SK-N-SH (cell line): ENCODE measurements at regions of chr3 and their contacts with region 1.

Region 1: GRCh38 chr3:125585595-125586223 is 9.6 kb downstream of the OSBPL11 start:
- DNase-seq: peak; percentile 66
- H3K4me3 ChIP-seq: peak overlapping the region in 1 of 2 experiments; percentile 9; a peak in 1 of 4 replicates
- H3K27ac ChIP-seq: no peak overlapping the region
- H3K4me1 ChIP-seq: peaks cover 5 to 6% of the 10 kb centered on the region in 2 experiments; a peak in 3 of 4 replicates
- H3K27me3 ChIP-seq: no peaks in the 10 kb centered on the region
- CTCF ChIP-seq: peak; percentile 94
- EP300 ChIP-seq: no peak
- RAD21 ChIP-seq: peak; percentile 97

Region 2: DNA sequence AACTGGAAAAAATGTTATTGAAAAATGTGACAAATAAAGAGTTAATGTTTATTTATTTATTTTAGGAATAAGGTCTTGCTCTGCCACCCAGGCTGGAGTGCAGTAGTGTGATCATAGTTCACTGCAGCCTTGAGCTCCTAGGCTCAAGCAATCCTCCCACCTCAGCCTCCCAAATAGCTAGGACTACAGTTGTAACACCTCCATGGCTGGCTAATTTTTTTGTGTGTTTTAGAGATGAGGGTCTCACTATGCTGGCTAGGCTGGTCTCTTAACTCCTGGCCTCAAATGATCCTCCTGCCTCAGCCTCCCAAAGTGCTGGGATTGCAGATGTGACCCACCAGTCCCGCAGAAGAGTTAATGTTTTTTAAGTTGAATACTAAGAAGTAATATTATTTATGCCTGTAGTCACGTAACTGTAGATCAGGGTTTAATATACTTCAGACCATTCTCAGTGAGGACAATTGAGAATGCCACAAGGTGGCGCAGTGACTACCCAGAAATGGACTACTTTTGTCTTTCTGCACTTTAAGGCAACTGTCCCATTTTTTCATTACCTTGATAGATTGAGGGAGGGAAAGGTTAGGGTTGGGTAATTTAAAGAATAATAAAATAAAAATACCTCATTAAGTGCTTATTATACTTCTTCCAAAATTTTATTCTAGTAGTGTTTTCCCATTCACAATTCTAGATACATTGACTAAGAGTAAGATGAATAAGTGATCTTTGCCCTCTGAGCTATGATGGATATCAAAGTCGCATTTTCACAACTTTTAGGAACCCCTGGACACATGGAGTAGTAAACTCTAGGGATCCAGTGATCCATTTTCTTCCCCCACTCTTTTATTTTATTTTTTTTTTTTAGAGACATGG is 657.1 kb before region 1 on chr3:
- CTCF ChIA-PET with region 1: interaction called, 33 read pairs
- POLR2A ChIA-PET with region 1: no interaction called
- DNase-seq: peak; percentile 39
- H3K4me3 ChIP-seq: peak overlapping the region in 1 of 2 experiments; percentile 48; a peak in 1 of 4 replicates
- H3K27ac ChIP-seq: no peak overlapping the region
- H3K4me1 ChIP-seq: no peaks in the 10 kb centered on the region; a peak in 1 of 4 replicates
- H3K27me3 ChIP-seq: no peaks in the 10 kb centered on the region
- CTCF ChIP-seq: peak; percentile 90
- EP300 ChIP-seq: no peak
- RAD21 ChIP-seq: peak; percentile 80

Region 3: DNA sequence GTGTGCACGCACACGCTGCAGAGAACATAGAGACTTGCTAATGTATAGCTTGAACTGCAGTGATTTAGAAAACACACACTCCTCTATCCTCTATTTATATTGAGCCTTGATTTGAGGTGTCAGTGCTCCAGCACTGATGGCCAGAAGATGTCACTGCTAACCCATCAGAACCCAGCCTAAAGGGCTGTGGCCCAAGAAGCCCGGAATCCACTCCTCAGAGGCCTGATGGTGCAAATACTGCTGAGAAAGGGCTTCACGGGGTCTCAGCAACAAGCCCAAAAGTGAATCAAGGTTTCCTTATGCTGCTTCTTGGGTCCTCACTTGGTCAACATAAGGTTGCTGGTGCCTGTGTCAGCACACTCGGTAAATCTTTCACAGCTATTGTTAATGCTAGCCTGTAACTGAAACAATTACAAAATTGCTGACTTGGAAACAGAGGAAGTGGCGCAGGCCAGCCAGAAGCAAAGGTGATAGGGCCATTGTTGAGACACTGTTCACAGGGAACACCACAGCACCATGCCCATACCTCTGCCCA is 590.2 kb before region 1 on chr3:
- CTCF ChIA-PET with region 1: interaction called, 134 read pairs
- POLR2A ChIA-PET with region 1: no interaction called
- DNase-seq: peak; percentile 73
- H3K4me3 ChIP-seq: no peak overlapping the region; a peak in 1 of 4 replicates
- H3K27ac ChIP-seq: no peak overlapping the region
- H3K4me1 ChIP-seq: peaks cover 0 to 38% of the 10 kb centered on the region in 2 experiments; a peak in 2 of 4 replicates
- H3K27me3 ChIP-seq: no peaks in the 10 kb centered on the region
- CTCF ChIP-seq: peak; percentile 69
- EP300 ChIP-seq: no peak
- RAD21 ChIP-seq: peak; percentile 96

Region 4: GRCh38 chr3:125437631-125438435 is 147.9 kb before region 1 on chr3:
- CTCF ChIA-PET with region 1: interaction called, 15 read pairs
- POLR2A ChIA-PET with region 1: interaction called, 3 read pairs
- DNase-seq: peak; percentile 54
- H3K4me3 ChIP-seq: no peak overlapping the region; a peak in 1 of 4 replicates
- H3K27ac ChIP-seq: no peak overlapping the region
- H3K4me1 ChIP-seq: peaks cover 0 to 6% of the 10 kb centered on the region in 2 experiments; a peak in 1 of 4 replicates
- H3K27me3 ChIP-seq: no peaks in the 10 kb centered on the region
- CTCF ChIP-seq: peak; percentile 97
- EP300 ChIP-seq: no peak
- RAD21 ChIP-seq: peak; percentile 90

Region 5: GRCh38 chr3:125573216-125573615 is 12.5 kb before region 1 on chr3:
- CTCF ChIA-PET with region 1: interaction called, 13 read pairs
- POLR2A ChIA-PET with region 1: no interaction called
- DNase-seq: no peak
- H3K4me3 ChIP-seq: no peak overlapping the region
- H3K27ac ChIP-seq: no peak overlapping the region
- H3K4me1 ChIP-seq: no peaks in the 10 kb centered on the region
- H3K27me3 ChIP-seq: no peaks in the 10 kb centered on the region
- CTCF ChIP-seq: no peak
- EP300 ChIP-seq: no peak
- RAD21 ChIP-seq: no peak

Region 6: DNA sequence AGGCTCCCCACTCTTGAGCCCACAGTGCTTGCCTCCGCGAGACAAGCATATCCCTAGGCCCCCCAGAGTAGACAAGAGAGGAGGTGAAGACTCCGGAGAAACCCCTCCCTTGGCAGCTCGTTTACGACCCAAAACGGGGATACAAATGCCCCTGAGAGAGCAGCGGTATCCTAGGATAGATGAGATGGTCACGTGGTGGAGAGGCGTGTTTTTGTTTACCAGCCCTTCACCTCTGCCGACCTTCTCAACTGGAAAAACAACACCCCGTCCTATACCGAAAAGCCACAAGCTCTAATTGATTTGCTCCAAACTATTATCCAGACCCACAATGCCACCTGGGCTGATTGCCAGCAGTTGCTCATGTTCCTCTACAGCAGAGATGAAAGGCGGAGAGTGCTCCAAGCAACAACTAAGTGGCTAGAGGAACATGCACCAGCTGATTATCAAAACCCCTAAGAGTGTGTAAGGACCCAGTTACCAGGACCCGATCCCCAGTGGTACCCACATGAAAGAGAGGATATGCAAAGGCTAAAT is 109.1 kb after region 1 on chr3:
- CTCF ChIA-PET with region 1: no interaction called
- POLR2A ChIA-PET with region 1: no interaction called
- DNase-seq: no peak
- H3K4me3 ChIP-seq: no peak overlapping the region
- H3K27ac ChIP-seq: no peak overlapping the region
- H3K4me1 ChIP-seq: no peaks in the 10 kb centered on the region
- H3K27me3 ChIP-seq: no peaks in the 10 kb centered on the region
- CTCF ChIP-seq: no peak
- EP300 ChIP-seq: no peak
- RAD21 ChIP-seq: no peak